ENCODE measurements at regions of chrX and their contacts with region 1.

Region 1: GRCh38 chrX:155070975-155071693 is at the starts of genes BRCC3, CMC4 and MTCP1:
- DNase-seq: peak; percentile 62 to 83 (median 74)
- H3K4me3 ChIP-seq: peak within 1 kb of the TSS; percentile 81
- H3K4me3 Mint-ChIP-seq: peak within 1 kb of the TSS; percentile 88 to 95 (median 90)
- H3K27ac ChIP-seq: peak within 1 kb of the TSS; percentile 86
- H3K27ac Mint-ChIP-seq: peak within 1 kb of the TSS; percentile 89 to 97 (median 94)
- H3K4me1 ChIP-seq: peaks cover 21% of the 10 kb centered on the region
- H3K4me1 Mint-ChIP-seq: peaks cover 40 to 73% (median 64%) of the 10 kb centered on the region in 3 donors
- H3K27me3 ChIP-seq: no peaks in the 10 kb centered on the region
- H3K27me3 Mint-ChIP-seq: peaks cover 0 to 2% of the 10 kb centered on the region in 2 donors
- total RNA-seq, gene BRCC3: 37.0 to 41.3 TPM
- total RNA-seq, gene CMC4: 3.6 to 4.3 TPM
- total RNA-seq, gene MTCP1: 22.6 to 24.2 TPM

Region 2: GRCh38 chrX:155026726-155027508 is 44.2 kb before region 1 on chrX and contains the start of gene FUNDC2:
- CTCF ChIA-PET with region 1: interaction called, 3 read pairs
- POLR2A ChIA-PET with region 1: interaction called, 10 read pairs
- DNase-seq: peak; percentile 89 to 97 (median 93)
- H3K4me3 ChIP-seq: peak within 1 kb of the TSS; percentile 81
- H3K4me3 Mint-ChIP-seq: peak within 1 kb of the TSS; percentile 86 to 98 (median 90)
- H3K27ac ChIP-seq: peak within 1 kb of the TSS; percentile 90
- H3K27ac Mint-ChIP-seq: peak within 1 kb of the TSS; percentile 97 to 99 (median 97)
- H3K4me1 ChIP-seq: peaks cover 14% of the 10 kb centered on the region
- H3K4me1 Mint-ChIP-seq: peaks cover 20 to 35% (median 21%) of the 10 kb centered on the region in 3 donors
- H3K27me3 ChIP-seq: no peaks in the 10 kb centered on the region
- H3K27me3 Mint-ChIP-seq: peaks cover 0 to 4% of the 10 kb centered on the region in 2 donors
- total RNA-seq, gene FUNDC2: 96.4 to 104 TPM